Activated CD4-positive, alpha-beta T cell treated with anti-CD3 and anti-CD28 coated beads, Interleukin-2, amount 10 ng/mL, durations not matched to agents 24 days and 14 days (primary cell): ENCODE measurements at regions of chr10 and their contacts with region 1.

Region 1: GRCh38 chr10:95693668-95694534 is at the start of gene TCTN3:
- DNase-seq: peak; percentile 99
- H3K4me3 Mint-ChIP-seq: peak within 1 kb of the TSS; percentile 99
- H3K27ac Mint-ChIP-seq: peak within 1 kb of the TSS; percentile 97
- H3K4me1 Mint-ChIP-seq: peaks cover 31% of the 10 kb centered on the region
- H3K27me3 Mint-ChIP-seq: no peaks in the 10 kb centered on the region
- total RNA-seq, gene TCTN3: 42.7 and 44.6 TPM in 2 replicates

Region 2: DNA sequence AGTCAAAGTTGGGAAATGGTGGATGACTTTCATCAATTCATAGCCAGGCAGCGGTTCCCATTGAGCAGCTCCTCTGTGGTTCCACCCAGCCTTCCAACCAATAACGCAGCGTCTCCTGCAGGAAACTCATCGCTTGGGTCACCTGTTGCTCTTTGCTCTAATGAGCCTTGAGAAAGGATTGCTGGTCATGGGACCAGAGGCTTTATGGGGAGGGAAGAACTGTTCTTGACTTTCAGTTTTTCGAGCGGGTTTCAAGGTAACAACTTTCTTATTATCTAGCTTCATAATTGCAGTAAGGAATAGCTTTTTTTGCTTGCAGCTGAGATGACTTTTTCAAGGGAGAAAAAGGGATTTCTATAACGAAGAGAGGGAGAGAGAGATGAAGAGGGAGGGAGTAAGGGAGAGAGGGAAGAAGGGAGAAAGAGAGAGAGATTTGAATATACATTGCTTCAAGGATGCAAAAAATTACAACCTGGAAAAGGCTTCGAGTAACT is 61.7 kb after region 1 on chr10:
- intact Hi-C with region 1: loop called (anchors 5 kb)
- DNase-seq: no peak
- H3K4me3 Mint-ChIP-seq: peak overlapping the region; percentile 80
- H3K27ac Mint-ChIP-seq: peak overlapping the region; percentile 74
- H3K4me1 Mint-ChIP-seq: peaks cover 29% of the 10 kb centered on the region
- H3K27me3 Mint-ChIP-seq: peaks cover 11% of the 10 kb centered on the region

Region 3: DNA sequence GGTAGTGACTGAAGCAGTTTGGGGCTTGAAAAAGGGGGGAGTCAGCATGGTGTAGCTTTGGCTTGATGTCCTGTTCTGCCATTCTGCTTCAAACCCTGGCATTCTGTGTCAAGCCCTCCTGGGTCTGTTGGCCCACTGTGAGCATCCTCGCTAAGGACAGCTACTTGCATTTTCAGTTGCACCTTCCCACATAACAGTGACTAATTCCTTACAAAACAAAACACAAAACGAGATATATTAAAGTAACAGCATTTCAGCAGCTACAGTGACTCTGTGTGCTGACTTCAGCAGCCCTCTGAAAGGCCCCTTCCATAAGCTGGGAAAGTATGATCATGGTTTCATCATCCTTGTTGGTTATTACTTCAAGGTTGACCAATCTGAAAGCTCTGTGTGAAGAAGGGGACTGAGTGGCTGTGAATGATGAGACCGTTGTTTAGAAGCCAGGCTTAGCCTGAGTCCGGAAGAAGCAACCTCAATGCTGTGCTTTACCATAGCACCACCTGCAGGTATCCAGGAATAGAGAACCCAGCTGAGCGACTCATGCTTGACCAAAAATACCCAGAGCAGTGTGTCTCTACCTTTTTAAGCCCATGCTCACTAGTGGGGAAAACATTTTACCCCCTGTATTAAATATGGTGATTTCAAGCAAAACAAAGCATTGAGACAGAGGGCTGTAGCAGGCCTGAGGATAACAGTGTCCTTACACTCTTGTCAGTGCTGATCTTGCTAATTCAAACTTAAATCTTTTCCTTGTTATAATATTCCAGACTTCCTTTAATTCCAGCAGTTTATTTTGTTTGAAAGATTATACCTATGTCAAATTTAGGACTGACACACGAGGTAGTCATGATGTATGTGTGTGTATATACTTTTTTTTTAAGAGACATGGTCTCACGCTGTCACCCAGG is 171.3 kb after region 1 on chr10:
- intact Hi-C with region 1: loop called (anchors 1 kb)
- DNase-seq: peak; percentile 88
- H3K4me3 Mint-ChIP-seq: peak overlapping the region; percentile 22
- H3K27ac Mint-ChIP-seq: peak overlapping the region; percentile 71
- H3K4me1 Mint-ChIP-seq: peaks cover 30% of the 10 kb centered on the region
- H3K27me3 Mint-ChIP-seq: no peaks in the 10 kb centered on the region

Region 4: GRCh38 chr10:96043033-96043932 is 349.4 kb after region 1 on chr10 and contains the start of gene CCNJ:
- intact Hi-C with region 1: loop called (anchors 5 kb)
- DNase-seq: peak; percentile 95
- H3K4me3 Mint-ChIP-seq: peak within 1 kb of the TSS; percentile 96
- H3K27ac Mint-ChIP-seq: peak within 1 kb of the TSS; percentile 90
- H3K4me1 Mint-ChIP-seq: peaks cover 36% of the 10 kb centered on the region
- H3K27me3 Mint-ChIP-seq: peaks cover 6% of the 10 kb centered on the region
- total RNA-seq, gene CCNJ: 9.3 and 9.4 TPM in 2 replicates

Region 5: GRCh38 chr10:96586419-96587263 is 892.7 kb after region 1 on chr10 and contains the start of gene TM9SF3:
- intact Hi-C with region 1: loop called (anchors 5 kb)
- DNase-seq: peak; percentile 97
- H3K4me3 Mint-ChIP-seq: peak within 1 kb of the TSS; percentile 93
- H3K27ac Mint-ChIP-seq: peak within 1 kb of the TSS; percentile 91
- H3K4me1 Mint-ChIP-seq: peaks cover 25% of the 10 kb centered on the region
- H3K27me3 Mint-ChIP-seq: peaks cover 13% of the 10 kb centered on the region
- total RNA-seq, gene TM9SF3: 84.5 and 86.1 TPM in 2 replicates